CD8-positive, alpha-beta T cell (primary cell): ENCODE measurements at regions of chr2 and their contacts with region 1.

Region 1: DNA sequence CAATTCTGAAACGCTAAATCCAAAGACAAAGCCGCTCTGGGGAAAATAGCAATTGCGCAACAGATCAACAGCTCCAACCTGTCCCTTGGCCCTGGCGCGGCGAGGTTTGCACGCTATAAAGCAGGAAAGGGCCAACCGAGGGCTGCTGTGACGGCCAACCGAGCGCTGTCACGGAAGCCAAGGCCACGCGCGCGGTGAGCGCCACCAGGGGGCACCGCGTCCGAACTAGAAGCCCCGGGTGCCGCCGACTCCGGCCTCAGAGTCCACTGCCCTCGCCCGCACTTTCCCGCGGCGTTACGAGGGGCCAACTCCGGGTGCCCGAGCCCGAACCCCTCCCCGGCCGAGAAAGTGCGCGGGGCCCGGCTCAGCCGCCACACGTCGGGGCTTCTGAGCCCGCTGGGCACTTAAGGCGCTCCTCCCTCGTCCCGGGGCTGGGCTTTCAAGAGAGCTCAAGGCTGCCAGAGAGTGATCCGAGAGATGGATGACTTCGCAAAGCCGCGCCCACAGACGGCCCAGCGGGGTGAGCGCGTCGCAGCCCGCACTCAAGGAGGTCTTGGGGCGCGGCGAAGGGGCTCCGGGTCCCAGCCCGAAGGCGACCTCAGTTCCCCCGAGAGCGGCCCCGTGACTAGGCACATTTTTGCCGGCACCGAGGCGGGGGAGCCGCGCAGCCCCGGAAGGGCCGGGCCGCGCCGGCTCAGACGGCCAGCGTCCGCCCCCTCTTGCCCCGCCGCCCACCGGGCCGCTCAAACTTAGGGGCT is 897 bp downstream of the NFE2L2 start:
- DNase-seq: peak; percentile 90 to 98 (median 96)
- ATAC-seq: peak; percentile 61
- H3K4me3 ChIP-seq: peak overlapping the region; percentile 86 to 97
- H3K4me3 Mint-ChIP-seq: peak overlapping the region; percentile 92
- H3K27ac ChIP-seq: peak overlapping the region; percentile 98 to 99
- H3K27ac Mint-ChIP-seq: peak overlapping the region; percentile 99
- H3K4me1 ChIP-seq: peaks cover 43% of the 10 kb centered on the region
- H3K4me1 Mint-ChIP-seq: peaks cover 49% of the 10 kb centered on the region
- H3K27me3 ChIP-seq: no peaks in the 10 kb centered on the region
- H3K27me3 Mint-ChIP-seq: no peaks in the 10 kb centered on the region
- CTCF ChIP-seq: peak; percentile 82

Region 2: DNA sequence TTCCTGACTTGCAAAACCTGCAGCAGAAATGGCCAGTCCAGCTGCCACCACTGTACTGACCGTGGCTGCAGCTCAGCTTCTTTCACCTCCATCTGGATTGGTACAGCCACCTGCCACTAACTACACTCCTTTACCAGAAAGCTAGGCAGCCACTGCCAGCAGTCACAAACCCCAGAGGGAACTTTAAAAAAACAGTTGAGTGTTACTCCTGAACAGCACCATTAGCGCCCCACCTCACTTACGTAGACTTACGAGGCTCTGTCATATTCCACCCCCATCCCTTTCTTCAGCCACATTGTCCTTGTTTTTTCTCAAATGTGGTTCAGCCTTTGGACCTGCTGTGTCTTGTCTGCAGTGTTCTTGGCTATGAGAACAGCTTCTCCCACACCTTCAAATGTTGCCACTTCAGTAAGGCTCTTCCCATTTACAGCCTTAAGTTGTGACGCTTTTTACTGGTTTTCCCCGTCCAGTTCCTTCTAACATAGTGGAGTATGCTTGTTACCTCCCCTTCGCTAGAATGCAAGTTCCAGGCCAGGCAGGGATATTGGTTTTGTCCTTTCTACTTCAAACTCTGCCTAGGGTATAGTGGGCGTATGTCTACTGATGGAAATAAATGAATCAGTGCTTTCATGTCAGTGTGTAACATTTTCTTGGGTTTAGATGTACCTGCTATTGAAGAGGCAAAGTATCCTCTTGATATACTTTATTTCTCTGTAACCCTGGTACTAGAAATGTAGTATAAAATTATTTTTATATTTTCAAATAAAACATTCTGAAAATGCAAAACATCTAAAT is 34.0 kb before region 1 on chr2:
- CTCF ChIA-PET with region 1: interaction called, 15 read pairs
- POLR2A ChIA-PET with region 1: interaction called, 87 read pairs
- intact Hi-C with region 1: loop called in 1 of 2 experiments (anchors 5 kb)
- DNase-seq: no peak
- ATAC-seq: no peak
- H3K4me3 ChIP-seq: no peak overlapping the region
- H3K4me3 Mint-ChIP-seq: no peak overlapping the region
- H3K27ac ChIP-seq: no peak overlapping the region
- H3K27ac Mint-ChIP-seq: peak overlapping the region; percentile 79
- H3K4me1 ChIP-seq: no peaks in the 10 kb centered on the region
- H3K4me1 Mint-ChIP-seq: peaks cover 41% of the 10 kb centered on the region
- H3K27me3 ChIP-seq: no peaks in the 10 kb centered on the region
- H3K27me3 Mint-ChIP-seq: no peaks in the 10 kb centered on the region
- CTCF ChIP-seq: no peak

Region 3: GRCh38 chr2:177281400-177282180 is 18.0 kb after region 1 on chr2:
- CTCF ChIA-PET with region 1: interaction called, 8 read pairs
- POLR2A ChIA-PET with region 1: interaction called, 23 read pairs
- intact Hi-C with region 1: no loop called
- DNase-seq: peak in 1 of 9 experiments; percentile 25
- ATAC-seq: no peak
- H3K4me3 ChIP-seq: no peak overlapping the region
- H3K4me3 Mint-ChIP-seq: no peak overlapping the region
- H3K27ac ChIP-seq: no peak overlapping the region
- H3K27ac Mint-ChIP-seq: no peak overlapping the region
- H3K4me1 ChIP-seq: no peaks in the 10 kb centered on the region
- H3K4me1 Mint-ChIP-seq: peaks cover 3% of the 10 kb centered on the region
- H3K27me3 ChIP-seq: no peaks in the 10 kb centered on the region
- H3K27me3 Mint-ChIP-seq: no peaks in the 10 kb centered on the region
- CTCF ChIP-seq: no peak

Region 4: DNA sequence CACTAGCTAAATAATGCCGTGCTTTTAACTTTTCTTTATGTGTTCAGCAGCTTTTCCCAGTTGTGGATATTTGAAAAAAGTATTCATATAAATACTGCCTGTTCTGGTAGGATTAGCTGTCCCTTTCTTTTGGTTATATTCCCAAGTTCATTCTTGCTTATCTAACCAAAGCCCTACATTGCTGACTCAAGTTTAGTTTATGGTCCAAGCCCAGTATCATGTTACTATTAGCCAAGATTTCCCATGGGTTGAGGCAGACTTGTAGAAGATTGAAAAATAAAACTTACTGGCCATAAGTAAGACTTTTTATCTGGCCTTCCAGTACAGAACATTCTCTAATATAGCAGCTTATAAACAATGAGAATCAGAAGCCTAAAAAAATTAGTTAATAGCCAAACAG is 50.6 kb after region 1 on chr2:
- CTCF ChIA-PET with region 1: interaction called, 27 read pairs
- POLR2A ChIA-PET with region 1: interaction called, 86 read pairs
- intact Hi-C with region 1: no loop called
- DNase-seq: no peak
- ATAC-seq: no peak
- H3K4me3 ChIP-seq: no peak overlapping the region
- H3K4me3 Mint-ChIP-seq: no peak overlapping the region
- H3K27ac ChIP-seq: no peak overlapping the region
- H3K27ac Mint-ChIP-seq: no peak overlapping the region
- H3K4me1 ChIP-seq: peaks cover 13% of the 10 kb centered on the region
- H3K4me1 Mint-ChIP-seq: peaks cover 28% of the 10 kb centered on the region
- H3K27me3 ChIP-seq: no peaks in the 10 kb centered on the region
- H3K27me3 Mint-ChIP-seq: no peaks in the 10 kb centered on the region
- CTCF ChIP-seq: no peak

Region 5: GRCh38 chr2:177419274-177419673 is 155.6 kb after region 1 on chr2:
- CTCF ChIA-PET with region 1: no interaction called
- POLR2A ChIA-PET with region 1: interaction called, 13 read pairs
- intact Hi-C with region 1: no loop called
- DNase-seq: no peak
- ATAC-seq: no peak
- H3K4me3 ChIP-seq: no peak overlapping the region
- H3K4me3 Mint-ChIP-seq: no peak overlapping the region
- H3K27ac ChIP-seq: no peak overlapping the region
- H3K27ac Mint-ChIP-seq: no peak overlapping the region
- H3K4me1 ChIP-seq: no peaks in the 10 kb centered on the region
- H3K4me1 Mint-ChIP-seq: peaks cover 27% of the 10 kb centered on the region
- H3K27me3 ChIP-seq: no peaks in the 10 kb centered on the region
- H3K27me3 Mint-ChIP-seq: no peaks in the 10 kb centered on the region
- CTCF ChIP-seq: no peak

Region 6: DNA sequence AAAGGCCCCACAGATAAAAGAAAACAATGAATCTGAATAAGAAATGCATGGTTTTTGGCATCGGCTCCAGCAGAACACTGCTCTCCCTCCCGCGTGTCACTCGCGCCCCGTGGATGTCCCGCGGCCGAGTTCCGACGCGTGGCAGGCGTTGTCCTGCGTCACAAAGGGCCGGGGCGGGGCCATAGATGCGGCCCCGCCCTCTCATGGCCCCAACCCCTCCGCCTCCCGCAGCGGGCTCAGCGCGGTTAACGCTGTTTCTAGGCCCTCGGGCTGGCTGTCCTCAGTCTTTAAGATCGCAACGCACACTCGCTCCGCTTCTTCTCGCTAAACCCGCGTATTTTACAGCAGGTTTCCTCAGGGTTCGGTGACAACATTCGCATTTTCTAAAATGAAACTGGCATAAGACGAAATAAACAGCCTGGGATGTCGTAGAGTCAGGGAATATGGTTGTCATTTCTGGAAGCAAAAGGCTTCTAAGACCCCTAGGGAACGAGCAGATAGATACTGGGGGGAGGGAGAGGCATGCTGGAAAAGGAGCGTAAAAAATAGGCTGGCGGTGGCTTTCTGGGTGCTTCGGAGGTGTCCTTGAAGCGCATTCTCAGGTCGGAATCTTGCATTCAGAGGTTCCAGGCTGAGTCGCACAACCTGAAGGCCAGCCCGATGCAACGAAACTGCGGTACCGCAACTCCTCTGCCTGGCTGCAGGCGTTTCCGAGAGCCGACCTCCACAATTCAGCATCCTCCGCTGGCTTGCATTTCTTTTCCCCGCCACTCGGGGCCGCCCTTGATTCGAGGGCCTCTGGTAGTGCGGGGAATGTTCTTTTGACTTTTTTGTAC is 1215.0 kb after region 1 on chr2 and contains the start of gene FKBP7:
- CTCF ChIA-PET with region 1: no interaction called
- POLR2A ChIA-PET with region 1: no interaction called
- intact Hi-C with region 1: loop called in 1 of 2 experiments (anchors 2 kb)
- DNase-seq: peak; percentile 79 to 95 (median 86)
- ATAC-seq: peak; percentile 82
- H3K4me3 ChIP-seq: peak within 1 kb of the TSS; percentile 84 to 88
- H3K4me3 Mint-ChIP-seq: peak within 1 kb of the TSS; percentile 98
- H3K27ac ChIP-seq: peak within 1 kb of the TSS; percentile 92 to 93
- H3K27ac Mint-ChIP-seq: peak within 1 kb of the TSS; percentile 99
- H3K4me1 ChIP-seq: peaks cover 39% of the 10 kb centered on the region
- H3K4me1 Mint-ChIP-seq: peaks cover 51% of the 10 kb centered on the region
- H3K27me3 ChIP-seq: no peaks in the 10 kb centered on the region
- H3K27me3 Mint-ChIP-seq: no peaks in the 10 kb centered on the region
- CTCF ChIP-seq: peak; percentile 87
- total RNA-seq, gene FKBP7: 0.69 to 0.79 TPM